PC-3 (cell line): ENCODE measurements at regions of chr11 and their contacts with region 1.

Region 1: GRCh38 chr11:66311965-66312548 is 4.8 kb downstream of the CD248 start:
- DNase-seq: peak; percentile 89
- ATAC-seq: peak; percentile 73
- H3K4me3 ChIP-seq: peak overlapping the region; percentile 77
- H3K27ac ChIP-seq: peak overlapping the region; percentile 30; the same call in 1 of the 2 replicates
- H3K4me1 ChIP-seq: peaks cover 5% of the 10 kb centered on the region
- H3K27me3 ChIP-seq: no peaks in the 10 kb centered on the region
- CTCF ChIP-seq: peak; percentile 98

Region 2: GRCh38 chr11:65291613-65292012 is 1020.4 kb before region 1 on chr11:
- CTCF ChIA-PET with region 1: no interaction called
- POLR2A ChIA-PET with region 1: no interaction called
- intact Hi-C with region 1: no loop called
- DNase-seq: peak; percentile 66
- ATAC-seq: peak; percentile 78
- H3K4me3 ChIP-seq: no peak overlapping the region
- H3K27ac ChIP-seq: peak overlapping the region; percentile 63
- H3K4me1 ChIP-seq: peaks cover 17% of the 10 kb centered on the region
- H3K27me3 ChIP-seq: no peaks in the 10 kb centered on the region
- CTCF ChIP-seq: no peak

Region 3: DNA sequence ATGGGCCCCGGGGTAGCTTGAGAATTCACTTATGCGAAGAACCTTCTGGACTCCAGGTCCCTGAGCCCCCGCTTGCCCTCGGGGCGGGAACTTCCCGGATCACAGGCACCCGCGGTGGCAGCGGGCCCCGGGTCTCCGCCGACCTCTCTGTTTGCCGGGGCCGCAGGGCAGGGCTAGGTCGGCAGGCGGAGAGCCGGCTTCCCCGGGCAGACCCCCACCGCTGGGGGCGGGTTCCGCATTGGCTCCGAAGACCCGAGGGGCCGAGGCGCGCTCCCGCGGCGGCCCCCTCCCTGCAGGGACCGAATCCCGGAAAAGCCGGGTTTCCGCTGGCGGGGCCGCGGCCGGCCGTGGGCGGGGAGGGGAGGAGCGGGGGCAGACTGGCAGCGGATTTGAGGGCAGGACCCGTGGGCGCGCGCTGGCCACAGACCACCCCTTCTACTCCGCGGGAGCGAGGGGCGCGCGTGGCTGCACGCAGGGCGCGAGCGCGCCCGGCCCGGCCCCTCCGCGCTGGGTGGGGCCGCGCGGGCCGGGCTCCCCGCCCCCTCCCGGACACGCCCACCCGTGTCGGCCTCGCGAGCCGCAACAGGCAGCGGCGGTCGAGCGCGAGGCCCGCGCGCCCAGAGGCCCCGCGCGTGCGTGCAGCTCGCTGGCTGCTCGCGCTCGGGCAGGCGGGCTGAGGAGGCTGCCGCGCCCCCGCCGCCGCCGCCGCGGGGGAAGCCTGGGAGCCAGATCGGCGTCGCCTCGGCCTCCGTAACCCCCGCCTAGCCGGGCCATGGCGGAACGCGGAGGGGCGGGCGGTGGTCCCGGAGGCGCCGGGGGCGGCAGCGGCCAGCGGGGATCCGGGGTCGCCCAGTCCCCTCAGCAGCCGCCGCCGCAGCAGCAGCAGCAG is 242.1 kb before region 1 on chr11 and contains the start of gene PACS1:
- CTCF ChIA-PET with region 1: no interaction called
- POLR2A ChIA-PET with region 1: interaction called, 24 read pairs
- intact Hi-C with region 1: no loop called
- DNase-seq: peak; percentile 81
- ATAC-seq: peak; percentile 73
- H3K4me3 ChIP-seq: peak within 1 kb of the TSS; percentile 83
- H3K27ac ChIP-seq: no peak within 1 kb of the TSS
- H3K4me1 ChIP-seq: peaks cover 25% of the 10 kb centered on the region
- H3K27me3 ChIP-seq: no peaks in the 10 kb centered on the region
- CTCF ChIP-seq: no peak; the same call in 1 of the 2 replicates
- total RNA-seq, gene PACS1: 28.7 and 31.5 TPM in 2 replicates

Region 4: DNA sequence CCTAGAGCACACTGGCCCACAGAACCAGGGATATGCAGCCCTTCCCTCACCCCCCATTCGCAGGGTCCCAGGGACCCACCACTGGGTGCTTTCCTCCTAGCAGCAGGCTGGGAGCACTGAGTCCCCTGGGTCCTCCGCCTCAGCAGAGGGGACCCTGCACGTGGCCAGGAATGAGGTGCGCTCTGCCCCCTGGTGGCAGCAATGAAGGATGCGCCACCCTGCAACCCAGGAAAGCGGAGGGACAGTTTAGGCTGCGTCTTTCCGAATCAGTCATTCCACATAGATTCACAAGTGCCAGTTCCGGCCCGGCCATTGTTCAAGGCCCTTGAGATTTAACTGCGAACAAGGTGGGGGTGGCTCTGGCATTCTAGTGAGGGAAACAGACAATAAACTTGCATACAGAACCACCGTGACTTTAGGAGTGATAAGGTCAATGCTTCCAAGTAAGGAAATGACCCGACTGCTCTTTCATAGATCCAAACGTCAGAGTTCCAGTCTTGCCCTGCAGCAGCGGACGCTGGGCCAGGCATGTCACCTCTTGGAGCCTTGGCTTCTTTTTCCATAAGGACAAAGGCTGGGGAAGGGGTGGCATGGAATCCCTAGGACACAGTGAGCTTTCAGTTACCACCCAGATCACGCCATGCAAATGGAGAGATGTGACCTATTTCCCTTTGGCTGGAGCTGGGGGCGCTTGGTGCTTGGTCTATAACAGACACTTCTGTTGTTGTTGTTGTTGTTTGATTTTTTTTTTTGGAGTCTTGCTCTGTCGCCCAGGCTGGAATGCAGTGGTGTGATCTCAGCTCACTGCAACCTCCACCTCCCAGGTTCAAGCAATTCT is 16.5 kb after region 1 on chr11:
- CTCF ChIA-PET with region 1: interaction called, 22 read pairs
- POLR2A ChIA-PET with region 1: interaction called, 9 read pairs
- intact Hi-C with region 1: loop called (anchors 1 kb)
- DNase-seq: peak; percentile 88
- ATAC-seq: peak; percentile 81
- H3K4me3 ChIP-seq: no peak overlapping the region
- H3K27ac ChIP-seq: no peak overlapping the region
- H3K4me1 ChIP-seq: peaks cover 23% of the 10 kb centered on the region
- H3K27me3 ChIP-seq: no peaks in the 10 kb centered on the region
- CTCF ChIP-seq: peak; percentile 97

Region 5: DNA sequence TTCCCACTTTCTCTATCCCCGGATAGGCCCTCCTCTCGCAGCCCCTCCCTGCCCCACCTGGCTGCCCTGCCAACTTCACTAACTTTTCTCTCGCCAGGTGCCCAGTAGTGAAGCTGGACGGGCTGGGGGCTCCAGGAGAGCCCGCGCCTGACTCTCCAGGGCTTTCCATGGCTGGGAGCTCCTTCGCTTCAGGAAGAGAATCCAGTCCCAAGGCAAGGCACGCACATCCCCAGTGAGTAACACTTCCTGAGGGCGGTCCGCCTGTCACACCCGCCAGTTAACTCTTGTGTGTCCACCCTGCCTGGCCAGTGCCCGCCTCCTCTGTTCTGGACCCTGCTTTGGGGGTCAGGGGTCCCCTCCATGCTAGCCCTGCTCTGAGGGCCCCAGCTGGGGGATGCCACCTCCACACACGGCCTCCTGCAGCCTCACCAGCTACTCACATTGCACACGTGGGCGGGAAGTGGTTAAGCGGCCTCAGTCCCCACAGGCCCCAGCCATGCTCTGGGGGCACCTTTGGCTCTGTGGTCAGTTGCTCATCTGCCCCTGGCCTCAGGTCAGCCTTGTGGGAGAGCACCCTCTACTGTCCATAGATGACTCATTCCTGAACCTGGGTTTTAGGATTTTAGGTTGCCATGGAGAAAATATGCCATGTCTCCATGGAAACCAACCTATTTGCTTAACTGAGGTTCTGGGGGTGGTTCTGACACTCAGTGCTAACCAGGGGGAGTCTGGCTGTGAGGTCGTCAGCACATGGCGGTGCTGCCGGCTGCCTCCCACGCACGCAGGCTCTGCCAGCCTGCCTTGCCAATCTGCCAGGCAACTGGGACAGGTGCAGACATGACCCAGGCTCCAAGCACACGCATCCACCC is 24.4 kb after region 1 on chr11 and contains the start of gene RIN1:
- CTCF ChIA-PET with region 1: interaction called, 21 read pairs
- POLR2A ChIA-PET with region 1: interaction called, 16 read pairs
- intact Hi-C with region 1: no loop called
- DNase-seq: peak; percentile 95
- ATAC-seq: peak; percentile 80
- H3K4me3 ChIP-seq: peak within 1 kb of the TSS; percentile 81
- H3K27ac ChIP-seq: peak within 1 kb of the TSS; percentile 96
- H3K4me1 ChIP-seq: peaks cover 31% of the 10 kb centered on the region
- H3K27me3 ChIP-seq: no peaks in the 10 kb centered on the region
- CTCF ChIP-seq: peak; percentile 44
- total RNA-seq, gene RIN1: 41.2 and 71.8 TPM in 2 replicates

Region 6: GRCh38 chr11:66371627-66372415 is 59.8 kb after region 1 on chr11 and contains the start of gene SLC29A2:
- CTCF ChIA-PET with region 1: no interaction called
- POLR2A ChIA-PET with region 1: interaction called, 10 read pairs
- intact Hi-C with region 1: no loop called
- DNase-seq: peak; percentile 96
- ATAC-seq: peak; percentile 79
- H3K4me3 ChIP-seq: peak within 1 kb of the TSS; percentile 89
- H3K27ac ChIP-seq: peak within 1 kb of the TSS; percentile 63
- H3K4me1 ChIP-seq: peaks cover 25% of the 10 kb centered on the region
- H3K27me3 ChIP-seq: no peaks in the 10 kb centered on the region
- CTCF ChIP-seq: no peak
- total RNA-seq, gene SLC29A2: 25.5 and 27.8 TPM in 2 replicates

Region 7: DNA sequence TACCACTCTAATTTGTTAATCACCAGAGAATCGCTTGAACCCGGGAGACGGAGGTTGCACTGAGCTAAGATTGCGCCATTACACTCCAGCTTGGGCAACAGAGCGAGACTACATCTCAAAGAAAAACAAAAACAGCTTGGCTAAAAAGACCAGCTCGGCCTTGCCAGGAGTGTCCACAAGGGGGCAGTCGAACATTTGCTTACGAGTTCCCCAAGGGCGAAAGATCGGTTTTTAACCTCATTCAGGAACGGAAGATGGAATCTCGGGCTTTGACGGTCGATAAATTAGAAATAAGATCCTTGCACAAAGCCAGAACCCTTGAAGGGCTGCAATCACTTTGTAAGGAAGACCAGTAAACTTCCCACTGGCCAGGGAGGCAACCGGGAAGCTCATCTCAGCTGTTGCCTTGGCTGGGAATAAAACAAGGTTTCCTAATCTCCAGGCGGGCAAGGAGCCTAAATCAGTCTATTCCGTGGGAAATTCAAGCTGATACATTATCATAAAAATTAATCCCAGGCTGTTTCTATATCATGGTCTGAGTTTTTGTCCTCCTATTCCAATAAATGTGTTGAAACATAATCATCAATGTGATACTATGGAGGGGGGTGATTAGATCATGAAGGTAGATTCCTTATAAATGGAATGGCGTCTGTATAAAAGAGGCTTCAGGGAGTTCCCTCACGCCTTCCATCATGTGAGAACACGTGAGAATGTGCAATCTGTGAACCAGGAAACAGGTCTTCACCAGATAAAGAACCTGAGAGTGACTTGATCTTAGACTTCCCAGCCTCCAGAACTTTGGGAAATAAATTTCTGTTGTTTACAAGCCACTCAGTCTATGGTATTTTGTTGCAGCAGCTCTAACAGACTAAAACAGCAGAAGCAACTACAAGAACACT is 74.4 kb after region 1 on chr11:
- CTCF ChIA-PET with region 1: interaction called, 17 read pairs
- POLR2A ChIA-PET with region 1: no interaction called
- intact Hi-C with region 1: loop called (anchors 1 kb)
- DNase-seq: peak; percentile 95
- ATAC-seq: peak; percentile 77
- H3K4me3 ChIP-seq: peak overlapping the region; percentile 58
- H3K27ac ChIP-seq: no peak overlapping the region
- H3K4me1 ChIP-seq: 0 out of 2 replicates have a peak, but pooled peaks cover 3% of the 10 kb centered on the region
- H3K27me3 ChIP-seq: no peaks in the 10 kb centered on the region
- CTCF ChIP-seq: peak; percentile 98